ENCODE measurements at regions of chr4 and their contacts with region 1.

Region 1: GRCh38 chr4:47836641-47837093 is 1.2 kb downstream of the CORIN start:
- DNase-seq: peak; percentile 73

Region 2: DNA sequence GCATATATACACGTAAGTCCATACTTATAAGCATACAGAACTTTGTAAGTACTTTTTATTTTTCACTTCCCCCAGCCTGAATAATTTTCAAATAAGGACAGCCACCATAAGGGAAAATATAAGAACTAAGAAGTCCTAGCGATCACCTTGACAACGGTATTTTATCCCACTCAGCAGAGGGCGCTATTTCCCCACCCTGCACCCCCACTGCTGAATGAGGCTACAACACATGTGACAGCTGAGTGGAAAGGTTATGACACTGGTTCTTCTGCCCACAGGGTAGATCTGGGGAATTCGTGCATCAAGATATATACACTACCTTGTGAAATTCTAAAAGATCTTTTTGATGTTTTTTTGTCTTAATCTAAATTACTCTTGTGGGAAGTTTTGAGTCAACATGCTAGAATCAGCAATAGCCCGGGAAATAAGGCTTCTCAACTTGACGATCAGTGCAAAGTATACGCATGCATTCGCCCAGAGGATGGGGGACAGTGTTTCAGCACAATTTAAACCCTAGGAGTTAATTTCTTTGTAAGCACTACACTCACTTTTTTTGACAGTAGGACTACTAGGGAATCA is 150.3 kb before region 1 on chr4:
- CTCF ChIA-PET with region 1: interaction called, 12 read pairs
- POLR2A ChIA-PET with region 1: no interaction called
- DNase-seq: peak; percentile 44

Region 3: DNA sequence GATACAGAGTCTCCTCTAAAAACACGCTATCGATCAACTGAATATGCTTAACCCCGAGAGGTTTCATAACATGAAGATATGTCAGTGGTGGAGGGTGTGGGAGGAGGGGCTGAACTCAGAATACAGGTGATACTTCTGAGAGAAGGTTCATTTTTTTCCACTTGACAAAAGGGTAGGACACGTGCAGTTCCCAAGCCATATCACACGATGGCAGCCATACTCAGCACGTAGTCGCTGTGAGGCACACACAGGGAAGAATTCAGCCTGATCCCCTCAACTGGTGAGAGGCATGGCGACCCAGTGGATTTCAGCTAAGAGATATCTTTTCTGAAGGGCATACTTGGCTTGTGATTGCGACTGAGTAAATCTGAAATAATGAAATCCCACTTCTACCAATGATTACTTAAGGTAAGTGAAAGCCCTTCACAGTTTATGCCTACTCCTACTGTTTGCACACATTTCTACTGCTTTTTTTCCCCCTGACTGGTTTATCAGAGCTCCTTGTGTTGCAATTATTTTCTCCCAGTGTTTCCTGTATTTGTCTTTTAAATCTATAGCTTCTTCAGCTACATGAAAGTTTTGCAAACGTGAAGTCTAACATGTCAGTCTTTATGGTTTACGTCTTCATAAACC is 131.9 kb before region 1 on chr4:
- CTCF ChIA-PET with region 1: interaction called, 20 read pairs
- POLR2A ChIA-PET with region 1: no interaction called
- DNase-seq: peak; percentile 28

Region 4: GRCh38 chr4:47926639-47927258 is 90.1 kb after region 1 on chr4:
- CTCF ChIA-PET with region 1: no interaction called
- POLR2A ChIA-PET with region 1: no interaction called
- DNase-seq: peak; percentile 58

Measured in HEK293T (cell line).